Gastrocnemius medialis (tissue), 4 donors: ENCODE measurements at regions of chr22 and their contacts with region 1.

Region 1: DNA sequence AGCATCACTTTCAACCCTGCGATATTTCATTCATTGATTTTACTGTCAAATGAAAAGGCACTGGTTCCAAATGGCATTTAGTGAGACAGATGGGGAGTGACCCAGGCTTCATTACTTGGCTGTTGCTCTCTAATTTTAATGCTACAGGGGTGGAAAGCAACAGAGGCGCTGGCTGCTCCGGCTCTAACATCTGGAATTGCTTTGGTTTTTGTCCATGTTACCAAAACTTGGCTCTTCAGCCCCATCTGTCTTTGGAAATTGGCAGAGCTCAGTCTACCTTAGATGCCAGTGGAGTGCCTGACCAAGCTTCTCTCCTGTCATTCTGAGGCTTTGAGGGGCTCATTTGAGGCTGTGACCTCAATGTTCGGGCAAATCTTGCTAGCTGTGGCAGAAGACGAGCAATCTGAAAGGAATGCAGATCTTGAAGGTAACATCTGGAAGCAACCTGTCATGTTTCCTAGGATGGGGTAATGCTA is 409.5 kb upstream of the SYN3 start:
- DNase-seq: no peak
- ATAC-seq: no peak
- H3K4me3 ChIP-seq: no peak overlapping the region
- H3K27ac ChIP-seq: no peak overlapping the region
- H3K4me1 ChIP-seq: peaks cover 22 to 30% of the 10 kb centered on the region in 2 donors
- H3K27me3 ChIP-seq: no peaks in the 10 kb centered on the region
- CTCF ChIP-seq: no peak
- POLR2A ChIP-seq: no peak

Region 2: DNA sequence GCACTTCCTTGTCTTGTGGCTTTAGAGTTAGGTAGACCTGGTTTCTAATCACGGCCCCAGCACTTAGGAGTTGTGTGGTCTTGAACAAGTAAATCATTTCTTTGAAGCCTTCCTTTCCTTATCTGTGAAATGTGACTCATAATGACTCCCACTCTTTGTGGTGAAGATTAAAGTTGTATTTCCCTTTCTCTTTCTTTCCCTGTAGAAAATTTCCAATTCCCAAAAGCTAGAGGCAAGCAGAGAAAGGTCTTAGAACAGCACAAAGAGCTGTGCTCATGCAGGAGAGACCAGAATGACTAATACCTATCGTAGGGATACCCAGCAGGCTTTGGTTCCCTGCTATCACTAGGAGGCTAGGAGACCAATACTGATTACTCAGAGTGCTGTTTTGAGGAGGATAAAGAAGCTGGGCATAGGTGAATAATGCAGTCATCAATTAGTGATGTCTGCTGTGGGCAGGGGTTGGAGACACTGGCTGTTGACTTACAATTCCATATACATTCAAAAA is 138.8 kb before region 1 on chr22:
- in situ Hi-C with region 1: no loop called
- intact Hi-C with region 1: no loop called
- DNase-seq: no peak
- ATAC-seq: no peak
- H3K4me3 ChIP-seq: no peak overlapping the region
- H3K27ac ChIP-seq: no peak overlapping the region
- H3K4me1 ChIP-seq: no peaks in the 10 kb centered on the region
- H3K27me3 ChIP-seq: no peaks in the 10 kb centered on the region
- CTCF ChIP-seq: no peak
- POLR2A ChIP-seq: no peak

Region 3: DNA sequence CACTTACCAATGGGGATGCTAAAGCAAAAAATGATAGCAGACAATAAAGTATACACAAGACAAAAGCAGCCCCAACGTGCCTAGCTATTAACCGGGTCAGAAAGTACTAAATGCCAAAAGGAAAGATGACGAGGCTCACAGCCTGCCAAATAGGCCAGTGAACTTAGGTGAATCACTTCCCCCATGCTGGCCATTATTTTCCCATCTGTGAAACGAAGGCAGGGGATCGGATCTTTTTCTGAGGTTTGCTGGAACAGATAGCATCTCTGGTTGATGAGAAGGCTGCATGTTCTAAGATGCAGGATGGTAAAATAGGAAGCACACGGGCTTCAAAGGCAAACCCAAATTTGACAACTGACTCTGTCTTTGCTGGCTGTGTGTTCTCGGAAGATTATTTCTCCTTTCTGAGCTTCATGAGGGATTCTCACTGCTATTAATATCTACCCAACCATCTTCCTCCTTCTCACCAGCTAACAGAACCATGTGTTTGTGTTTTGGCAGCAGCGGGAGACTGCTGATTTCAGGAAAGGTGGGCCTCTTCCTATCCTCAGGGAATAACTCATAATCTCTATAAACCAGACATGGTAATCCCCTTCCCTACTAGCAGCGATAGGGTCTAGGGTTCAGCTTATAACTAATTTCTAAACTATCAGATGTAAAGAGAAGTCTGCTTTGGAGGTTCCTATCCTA is 61.9 kb after region 1 on chr22:
- in situ Hi-C with region 1: loop called in 1 of 4 experiments (anchors 10 kb)
- intact Hi-C with region 1: no loop called
- DNase-seq: no peak
- ATAC-seq: peak; percentile 39 to 66
- H3K4me3 ChIP-seq: no peak overlapping the region
- H3K27ac ChIP-seq: peak overlapping the region in 3 of 4 donors; percentile 42 to 60 (median 49)
- H3K4me1 ChIP-seq: peaks cover 24 to 25% of the 10 kb centered on the region in 2 donors
- H3K27me3 ChIP-seq: no peaks in the 10 kb centered on the region
- CTCF ChIP-seq: no peak
- POLR2A ChIP-seq: no peak

Region 4: GRCh38 chr22:33579448-33580093 is 111.9 kb after region 1 on chr22:
- in situ Hi-C with region 1: no loop called
- intact Hi-C with region 1: loop called (anchors 5 kb)
- DNase-seq: peak in 1 of 2 donors; percentile 34
- ATAC-seq: peak; percentile 70 to 87
- H3K4me3 ChIP-seq: no peak overlapping the region
- H3K27ac ChIP-seq: no peak overlapping the region
- H3K4me1 ChIP-seq: peaks cover 0 to 9% of the 10 kb centered on the region in 2 donors
- H3K27me3 ChIP-seq: no peaks in the 10 kb centered on the region
- CTCF ChIP-seq: peak; percentile 84 to 94 (median 86)
- POLR2A ChIP-seq: no peak